Activated B cell treated with CpG ODN at 0.5 μM for 24 hours (primary cell): ENCODE measurements at regions of chr12 and their contacts with region 1.

Region 1: GRCh38 chr12:50400598-50401364 is at the start of gene LARP4:
- DNase-seq: peak; percentile 77
- ATAC-seq: peak; percentile 94
- H3K4me3 Mint-ChIP-seq: peak within 1 kb of the TSS; percentile 97
- H3K27ac Mint-ChIP-seq: peak within 1 kb of the TSS; percentile 91
- H3K4me1 Mint-ChIP-seq: peaks cover 38% of the 10 kb centered on the region
- H3K27me3 Mint-ChIP-seq: peaks cover 5% of the 10 kb centered on the region
- CTCF ChIP-seq: no peak
- total RNA-seq, gene LARP4: 48.2 and 56.3 TPM in 2 replicates

Region 2: DNA sequence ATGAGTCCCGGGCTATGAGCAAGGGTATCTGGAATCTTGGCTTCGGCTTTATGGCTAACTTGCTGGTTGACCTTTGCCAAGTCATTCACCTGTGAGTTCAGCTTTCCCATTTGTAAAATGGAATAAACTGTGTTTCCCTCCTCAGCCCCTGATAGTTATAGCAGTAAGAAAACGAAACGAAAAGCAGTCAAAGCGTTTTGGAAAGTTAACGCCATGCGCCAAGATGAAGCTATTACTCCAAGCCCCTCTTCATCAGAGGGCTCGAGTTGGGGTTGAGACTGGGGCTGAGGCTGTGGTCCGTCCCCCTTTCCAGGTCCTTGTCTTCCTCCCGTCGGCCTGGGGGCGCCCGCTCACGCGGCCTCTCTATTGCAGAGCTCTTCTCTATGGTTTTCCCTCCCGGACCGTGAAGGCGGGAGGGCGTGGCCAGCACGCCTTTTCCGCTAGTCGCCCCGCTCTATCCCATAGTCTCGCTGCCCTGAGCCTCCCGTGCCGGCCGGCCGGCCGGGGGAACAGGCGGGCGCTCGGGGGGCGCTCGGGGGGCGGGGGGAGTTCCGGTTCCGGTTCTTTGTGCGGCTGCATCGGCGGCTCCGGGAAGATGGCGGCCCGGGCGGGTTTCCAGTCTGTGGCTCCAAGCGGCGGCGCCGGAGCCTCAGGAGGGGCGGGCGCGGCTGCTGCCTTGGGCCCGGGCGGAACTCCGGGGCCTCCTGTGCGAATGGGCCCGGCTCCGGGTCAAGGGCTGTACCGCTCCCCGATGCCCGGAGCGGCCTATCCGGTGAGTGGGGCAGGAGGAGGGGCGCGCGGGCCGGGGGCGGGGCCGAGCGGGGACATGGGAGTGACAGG is 315.8 kb before region 1 on chr12 and contains the start of gene SMARCD1:
- CTCF ChIA-PET with region 1: no interaction called
- POLR2A ChIA-PET with region 1: interaction called, 3 read pairs
- intact Hi-C with region 1: loop called (anchors 2 kb)
- DNase-seq: peak; percentile 82
- ATAC-seq: peak; percentile 86
- H3K4me3 Mint-ChIP-seq: peak within 1 kb of the TSS; percentile 94
- H3K27ac Mint-ChIP-seq: peak within 1 kb of the TSS; percentile 97
- H3K4me1 Mint-ChIP-seq: peaks cover 35% of the 10 kb centered on the region
- H3K27me3 Mint-ChIP-seq: no peaks in the 10 kb centered on the region
- CTCF ChIP-seq: no peak
- total RNA-seq, gene SMARCD1: 101 and 108 TPM in 2 replicates

Region 3: GRCh38 chr12:50283229-50283923 is 117.4 kb before region 1 on chr12 and contains the start of gene LIMA1:
- CTCF ChIA-PET with region 1: no interaction called
- POLR2A ChIA-PET with region 1: no interaction called
- intact Hi-C with region 1: loop called (anchors 5 kb)
- DNase-seq: peak; percentile 95
- ATAC-seq: peak; percentile 97
- H3K4me3 Mint-ChIP-seq: peak within 1 kb of the TSS; percentile 91
- H3K27ac Mint-ChIP-seq: peak within 1 kb of the TSS; percentile 71
- H3K4me1 Mint-ChIP-seq: peaks cover 17% of the 10 kb centered on the region
- H3K27me3 Mint-ChIP-seq: no peaks in the 10 kb centered on the region
- CTCF ChIP-seq: no peak
- total RNA-seq, gene LIMA1: 5.7 and 6.7 TPM in 2 replicates

Region 4: DNA sequence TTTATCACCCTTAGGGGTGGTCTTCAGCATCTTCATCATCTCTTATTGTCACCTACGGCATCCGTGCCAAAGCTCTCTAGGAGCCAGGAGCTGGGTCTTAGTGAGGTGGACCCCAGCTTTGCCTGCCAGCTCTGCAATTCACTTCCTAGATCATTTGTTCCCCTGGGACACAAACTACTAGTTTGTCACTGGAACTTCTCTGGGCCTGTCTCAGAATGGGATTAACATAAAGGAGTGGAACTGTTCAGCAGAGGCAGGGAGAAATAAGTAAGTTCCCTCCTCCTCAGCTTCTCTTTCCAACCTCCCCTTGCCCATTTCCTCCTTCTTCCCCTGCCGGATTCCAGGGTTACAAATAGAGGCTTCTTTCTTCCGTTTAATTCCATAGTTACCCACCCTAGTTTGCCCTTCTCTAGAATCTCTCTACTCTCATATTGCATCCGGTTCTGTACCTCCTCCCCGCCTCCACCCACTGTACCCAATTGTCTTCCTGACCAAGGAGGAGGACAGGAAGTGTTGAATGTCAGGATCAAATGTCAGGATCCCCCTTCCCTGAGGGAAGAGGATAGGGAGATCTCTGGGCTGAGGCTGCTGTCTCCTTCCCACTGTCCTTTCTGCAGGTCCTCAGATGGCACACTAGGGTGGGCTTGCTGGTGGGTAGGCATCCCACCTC is 24.9 kb after region 1 on chr12:
- CTCF ChIA-PET with region 1: no interaction called
- POLR2A ChIA-PET with region 1: interaction called, 10 read pairs
- intact Hi-C with region 1: no loop called
- DNase-seq: no peak
- ATAC-seq: no peak
- H3K4me3 Mint-ChIP-seq: no peak overlapping the region
- H3K27ac Mint-ChIP-seq: peak overlapping the region; percentile 35
- H3K4me1 Mint-ChIP-seq: no peaks in the 10 kb centered on the region
- H3K27me3 Mint-ChIP-seq: no peaks in the 10 kb centered on the region
- CTCF ChIP-seq: no peak

Region 5: DNA sequence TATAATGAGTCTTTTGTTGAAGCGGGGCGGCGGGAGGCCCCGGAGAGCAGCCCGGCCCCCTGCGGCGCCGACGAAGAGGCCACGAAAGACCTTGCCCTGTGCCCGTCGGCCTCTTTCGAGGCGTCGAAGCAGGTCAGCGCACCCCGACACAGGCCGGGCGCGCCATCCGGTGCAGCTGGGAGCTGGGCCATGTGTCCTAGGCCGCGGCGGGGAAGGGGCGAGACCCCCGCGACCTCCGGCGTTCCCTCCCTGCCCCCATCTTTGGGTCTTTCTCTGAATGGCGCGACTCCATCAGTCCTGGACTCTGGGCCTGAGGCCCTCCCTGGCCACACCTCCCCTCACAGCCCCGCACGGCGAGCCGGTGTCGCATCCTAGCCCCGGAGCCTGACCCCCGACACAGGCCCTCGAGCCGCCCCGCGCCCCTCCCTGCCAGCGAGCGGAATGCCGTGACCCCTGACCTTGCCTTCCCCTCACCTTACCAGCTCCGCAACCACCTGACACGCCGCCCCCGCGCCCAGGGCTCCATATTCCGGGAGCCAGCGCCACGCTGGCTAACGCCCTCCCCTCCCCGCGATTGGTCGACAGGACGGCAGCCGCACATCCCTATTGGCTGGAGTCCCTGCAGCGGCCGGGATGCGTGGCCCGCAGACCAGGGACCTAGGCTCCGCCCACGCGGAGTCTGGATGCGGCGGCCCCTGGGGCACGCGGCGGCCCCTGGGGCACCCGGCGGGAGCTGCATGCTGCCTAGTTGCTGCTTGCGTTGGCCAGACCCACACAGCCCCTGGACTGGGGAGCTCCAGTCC is 625.3 kb after region 1 on chr12 and contains the start of gene SLC11A2:
- CTCF ChIA-PET with region 1: no interaction called
- POLR2A ChIA-PET with region 1: no interaction called
- intact Hi-C with region 1: loop called (anchors 5 kb)
- DNase-seq: peak; percentile 86
- ATAC-seq: peak; percentile 98
- H3K4me3 Mint-ChIP-seq: peak within 1 kb of the TSS; percentile 99
- H3K27ac Mint-ChIP-seq: peak within 1 kb of the TSS; percentile 93
- H3K4me1 Mint-ChIP-seq: peaks cover 42% of the 10 kb centered on the region
- H3K27me3 Mint-ChIP-seq: no peaks in the 10 kb centered on the region
- CTCF ChIP-seq: no peak
- total RNA-seq, gene SLC11A2: 32.3 and 44.6 TPM in 2 replicates